ENCODE measurements at regions of chrX and their contacts with region 1.

Region 1: GRCh38 chrX:68828740-68829552 is at the start of gene EFNB1:
- DNase-seq: peak; percentile 74 to 97 (median 91)

Region 2: DNA sequence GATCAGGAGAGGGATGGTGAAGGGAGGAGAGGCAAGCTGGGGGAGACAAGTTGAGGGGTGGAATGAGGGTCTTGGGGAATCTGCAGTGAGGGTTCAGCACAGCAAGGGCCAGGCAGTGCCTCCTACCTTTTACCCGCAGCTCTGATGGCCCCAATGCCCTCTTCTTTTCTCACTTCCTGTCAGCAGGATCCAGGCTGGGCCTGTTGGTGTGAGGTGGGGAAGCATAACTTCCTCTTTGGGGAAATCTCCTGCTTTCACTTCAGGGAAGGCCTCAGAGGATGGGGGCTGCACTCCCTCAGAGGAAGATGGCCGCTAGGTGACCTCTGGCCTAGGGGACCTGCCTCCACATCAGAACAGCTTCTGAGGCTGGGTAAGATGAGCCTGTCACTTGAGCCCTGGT is 36.4 kb after region 1 on chrX:
- intact Hi-C with region 1: no loop called
- DNase-seq: peak in 3 of 42 donors; percentile 4 to 18 (median 12)

Region 3: GRCh38 chrX:69165087-69165651 is 336.2 kb after region 1 on chrX and contains the start of gene PJA1:
- intact Hi-C with region 1: loop called (anchors 10 kb)
- DNase-seq: peak; percentile 53 to 93 (median 80)

Region 4: GRCh38 chrX:69222103-69223090 is 393.5 kb after region 1 on chrX:
- intact Hi-C with region 1: loop called (anchors 5 kb)
- DNase-seq: peak; percentile 42 to 90 (median 79)

Region 5: DNA sequence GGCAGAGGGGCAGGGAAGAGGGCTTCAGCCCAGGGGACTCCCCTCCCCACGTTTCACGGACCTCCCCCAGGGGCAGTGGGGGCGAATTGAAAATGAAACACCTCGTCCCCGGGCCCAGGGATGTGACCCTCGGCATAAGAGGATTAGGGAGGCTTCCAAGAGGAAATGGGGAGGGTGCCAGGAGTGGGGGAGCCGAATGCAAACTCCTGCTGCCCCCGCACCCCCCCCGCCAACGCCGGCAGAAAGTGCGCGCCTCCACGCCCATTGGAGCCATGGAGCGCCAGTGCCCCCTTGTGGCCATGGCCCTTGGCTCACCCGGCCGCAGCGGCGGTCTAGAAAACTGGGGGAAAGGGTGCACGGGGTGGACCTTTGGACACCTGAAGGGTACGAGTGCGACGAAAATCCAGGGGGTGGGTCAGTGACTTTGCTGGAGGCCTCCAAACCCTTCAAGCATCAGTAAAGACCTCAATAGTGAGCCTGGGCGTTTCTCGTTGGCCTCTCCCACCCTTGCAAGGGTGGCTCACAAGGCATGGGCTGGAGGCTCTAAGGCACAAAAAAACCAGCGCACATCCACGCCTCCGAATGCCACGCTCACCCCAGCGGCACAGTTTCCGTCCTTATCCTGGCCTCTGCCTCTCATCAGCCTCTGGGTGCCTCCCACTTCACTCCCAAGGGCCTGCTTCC is 457.1 kb after region 1 on chrX:
- intact Hi-C with region 1: loop called (anchors 5 kb)
- DNase-seq: peak; percentile 16 to 83 (median 59)

Measured in head of caudate nucleus (tissue), 42 donors.